ENCODE measurements at regions of chr11 and their contacts with region 1.

Region 1: GRCh38 chr11:48097041-48097476 is 116.7 kb downstream of the PTPRJ start:
- DNase-seq: no peak
- H3K4me3 Mint-ChIP-seq: peak overlapping the region; percentile 55
- H3K27ac Mint-ChIP-seq: peak overlapping the region; percentile 87
- H3K4me1 Mint-ChIP-seq: peaks cover 72% of the 10 kb centered on the region
- H3K27me3 Mint-ChIP-seq: no peaks in the 10 kb centered on the region

Region 2: DNA sequence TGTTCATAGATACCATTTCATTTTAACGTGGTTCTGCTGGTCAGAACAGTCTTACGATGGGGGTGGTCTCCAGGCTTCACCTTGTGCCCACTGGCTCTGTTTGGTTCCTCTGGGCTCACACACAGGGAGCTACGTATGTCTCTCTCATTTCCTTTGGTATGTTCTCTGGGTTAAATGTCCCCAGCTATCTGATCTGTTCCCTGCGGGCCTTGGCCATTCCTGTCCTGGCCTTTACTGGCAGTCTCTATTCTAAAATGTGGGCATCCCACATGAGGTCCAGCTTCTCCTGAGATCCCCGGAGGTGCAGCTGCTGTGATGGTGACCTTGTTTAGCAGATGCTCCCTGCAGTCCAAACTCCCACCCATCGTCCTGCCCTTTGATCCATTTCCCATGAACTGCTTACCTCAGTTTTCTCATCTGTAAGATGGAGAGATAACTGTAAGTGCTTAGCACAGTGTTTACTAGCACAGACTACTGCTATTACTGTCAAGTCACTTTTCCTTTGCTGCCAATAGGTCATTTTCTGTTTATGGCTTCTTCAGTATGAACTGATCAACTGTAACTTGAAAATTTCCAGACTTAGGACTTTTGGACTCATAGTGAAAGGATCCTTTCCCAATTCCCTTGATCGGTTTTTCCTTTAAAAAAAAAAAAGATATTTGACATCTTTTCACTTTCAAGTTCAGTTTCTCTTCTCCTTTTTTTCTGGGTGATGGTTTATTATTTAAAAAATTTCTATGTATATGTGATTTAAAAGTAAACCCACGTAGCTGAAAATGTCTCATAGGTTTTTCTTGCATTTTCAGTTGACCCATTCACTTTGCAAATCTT is 23.8 kb before region 1 on chr11:
- intact Hi-C with region 1: loop called (anchors 1 kb)
- DNase-seq: no peak
- H3K4me3 Mint-ChIP-seq: no peak overlapping the region
- H3K27ac Mint-ChIP-seq: peak overlapping the region; percentile 51
- H3K4me1 Mint-ChIP-seq: peaks cover 42% of the 10 kb centered on the region
- H3K27me3 Mint-ChIP-seq: no peaks in the 10 kb centered on the region

Region 3: GRCh38 chr11:48081151-48082010 is 15.7 kb before region 1 on chr11:
- intact Hi-C with region 1: loop called (anchors 2 kb)
- DNase-seq: peak; percentile 16
- H3K4me3 Mint-ChIP-seq: peak overlapping the region; percentile 5
- H3K27ac Mint-ChIP-seq: peak overlapping the region; percentile 72
- H3K4me1 Mint-ChIP-seq: peaks cover 56% of the 10 kb centered on the region
- H3K27me3 Mint-ChIP-seq: no peaks in the 10 kb centered on the region

Measured in activated T-helper 1 cell treated with anti-CD3 and anti-CD28 coated beads, Interleukin-12 subunit alpha, Interleukin-12 subunit beta, Interleukin-2, Interleukin-4 antibody, amounts not matched to agents 30 ng/mL and 10 ng/mL and 1 ng/mL, durations not matched to agents 14 hours and 24 hours and 36 hours (primary cell).